ENCODE measurements at regions of chr12 and their contacts with region 1.

Region 1: GRCh38 chr12:53159195-53159839 is 21.2 kb upstream of the ZNF740 start:
- DNase-seq: peak; percentile 88
- H3K4me3 ChIP-seq: peak overlapping the region in 1 of 2 experiments; percentile 4; a peak in 1 of 4 replicates
- H3K27ac ChIP-seq: no peak overlapping the region
- H3K4me1 ChIP-seq: peaks cover 0 to 2% of the 10 kb centered on the region in 2 experiments; a peak in 2 of 4 replicates
- H3K27me3 ChIP-seq: no peaks in the 10 kb centered on the region
- CTCF ChIP-seq: peak; percentile 96
- EP300 ChIP-seq: no peak
- RAD21 ChIP-seq: peak; percentile 86

Region 2: DNA sequence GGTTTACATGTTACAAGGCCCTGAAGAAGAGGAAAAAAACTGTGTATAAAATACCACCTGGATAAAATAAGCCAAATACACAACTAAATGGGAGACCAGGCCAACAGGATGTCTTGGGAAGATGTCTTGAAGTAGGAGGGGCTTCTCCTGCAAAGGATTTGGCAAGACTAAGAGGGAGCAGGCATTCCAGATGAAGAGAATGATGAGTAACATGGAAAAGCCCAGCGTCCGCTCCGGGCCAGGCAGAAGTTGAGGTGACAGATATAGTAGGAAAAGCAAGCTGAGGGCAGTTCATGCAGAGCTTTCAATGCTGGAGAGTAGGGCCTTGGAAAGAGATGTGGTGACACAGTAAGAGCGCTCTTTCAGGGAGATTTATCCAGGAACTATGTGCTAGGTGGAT is 169.1 kb before region 1 on chr12:
- CTCF ChIA-PET with region 1: no interaction called
- POLR2A ChIA-PET with region 1: no interaction called
- DNase-seq: no peak
- H3K4me3 ChIP-seq: no peak overlapping the region
- H3K27ac ChIP-seq: no peak overlapping the region
- H3K4me1 ChIP-seq: no peaks in the 10 kb centered on the region
- H3K27me3 ChIP-seq: no peaks in the 10 kb centered on the region
- CTCF ChIP-seq: no peak
- EP300 ChIP-seq: no peak
- RAD21 ChIP-seq: no peak

Region 3: DNA sequence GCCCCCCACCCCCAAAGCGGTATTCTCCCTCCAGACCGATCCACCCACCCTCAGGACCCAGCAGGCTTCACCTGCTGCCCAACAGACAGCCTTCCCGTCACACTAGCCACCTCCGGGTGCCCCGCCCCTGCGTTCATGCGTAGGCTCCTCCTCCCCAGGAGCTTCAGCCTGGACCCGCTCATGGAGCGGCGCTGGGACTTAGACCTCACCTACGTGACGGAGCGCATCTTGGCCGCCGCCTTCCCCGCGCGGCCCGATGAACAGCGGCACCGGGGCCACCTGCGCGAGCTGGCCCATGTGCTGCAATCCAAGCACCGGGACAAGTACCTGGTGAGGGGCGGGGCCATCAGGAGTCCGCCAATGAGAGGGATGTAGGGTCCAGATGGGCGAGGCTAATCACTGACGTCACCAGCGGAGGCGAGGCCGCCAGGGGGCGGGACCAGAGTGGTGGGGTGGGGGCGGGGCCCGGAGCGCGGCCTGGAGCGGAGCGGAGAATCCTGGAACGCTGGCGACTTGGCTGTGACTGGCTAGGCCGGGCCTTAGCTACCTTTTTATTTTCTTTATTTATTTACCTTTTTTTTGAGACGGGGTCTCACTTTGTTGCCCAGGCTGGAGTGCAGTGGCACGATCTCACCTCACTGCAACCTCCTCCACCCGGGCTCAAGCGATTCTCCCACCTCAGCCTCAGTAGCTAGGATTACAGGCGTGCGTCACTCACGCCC is 105.0 kb before region 1 on chr12:
- CTCF ChIA-PET with region 1: interaction called, 16 read pairs
- POLR2A ChIA-PET with region 1: no interaction called
- DNase-seq: peak; percentile 97
- H3K4me3 ChIP-seq: peak overlapping the region; percentile 66
- H3K27ac ChIP-seq: peak overlapping the region; percentile 35 to 78; a peak in 3 of 4 replicates
- H3K4me1 ChIP-seq: peaks cover 25 to 46% of the 10 kb centered on the region in 2 experiments
- H3K27me3 ChIP-seq: no peaks in the 10 kb centered on the region
- CTCF ChIP-seq: no peak
- EP300 ChIP-seq: no peak
- RAD21 ChIP-seq: no peak

Region 4: DNA sequence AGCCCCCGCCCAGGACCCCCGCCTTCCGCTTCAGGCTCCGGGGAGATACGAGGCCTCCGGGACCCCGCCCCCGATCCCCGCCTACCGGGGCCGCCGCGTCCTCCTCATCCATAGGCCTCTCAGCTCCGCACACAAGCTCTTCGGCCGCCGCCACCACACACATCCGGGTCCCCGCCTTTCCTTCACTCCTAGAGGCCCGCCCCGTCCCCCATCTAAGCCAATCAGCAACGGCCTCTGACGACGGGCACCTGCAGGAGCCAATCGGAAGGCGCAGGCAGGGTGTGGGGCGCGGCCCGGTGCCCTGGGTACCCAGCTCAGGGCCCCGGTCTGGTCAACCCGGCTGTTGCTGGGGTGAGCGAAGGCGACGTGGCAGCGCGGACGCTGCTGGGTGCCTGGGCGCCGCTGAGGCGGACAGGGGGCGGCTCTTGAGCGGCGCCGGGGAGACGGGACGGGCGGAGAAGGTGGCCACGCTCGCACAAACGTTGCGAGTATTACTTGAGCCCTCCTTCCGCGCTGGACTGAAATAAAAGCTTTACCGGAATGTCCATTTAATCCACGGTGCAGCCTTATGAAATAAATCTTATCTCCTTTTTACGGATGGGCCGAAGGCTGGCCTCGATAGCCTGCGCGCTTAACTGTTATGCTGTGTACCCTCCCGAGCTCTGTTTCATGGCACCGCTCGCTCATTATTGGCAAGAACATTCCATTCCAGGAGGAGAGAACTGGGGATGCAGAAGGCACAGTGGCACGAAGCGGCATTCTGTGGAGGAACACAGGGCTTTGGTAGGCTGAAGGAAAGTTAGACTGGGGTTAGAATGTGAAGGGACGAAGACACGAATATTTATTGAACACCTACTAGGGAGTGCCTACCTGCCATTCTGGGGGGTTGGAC is 79.8 kb before region 1 on chr12 and contains the start of gene SPRYD3:
- CTCF ChIA-PET with region 1: interaction called, 10 read pairs
- POLR2A ChIA-PET with region 1: no interaction called
- DNase-seq: peak; percentile 100
- H3K4me3 ChIP-seq: peak within 1 kb of the TSS; percentile 55 to 72
- H3K27ac ChIP-seq: peak within 1 kb of the TSS; percentile 94 to 96
- H3K4me1 ChIP-seq: peaks cover 7 to 14% of the 10 kb centered on the region in 2 experiments; a peak in 2 of 4 replicates
- H3K27me3 ChIP-seq: no peaks in the 10 kb centered on the region
- CTCF ChIP-seq: no peak
- EP300 ChIP-seq: no peak; a peak in 1 of 4 replicates
- RAD21 ChIP-seq: no peak
- polyA plus RNA-seq, gene SPRYD3: 20.3 and 25.8 TPM in 2 replicates

Region 5: GRCh38 chr12:53145383-53146260 is 13.7 kb before region 1 on chr12:
- CTCF ChIA-PET with region 1: interaction called, 12 read pairs
- POLR2A ChIA-PET with region 1: no interaction called
- DNase-seq: no peak
- H3K4me3 ChIP-seq: no peak overlapping the region
- H3K27ac ChIP-seq: no peak overlapping the region
- H3K4me1 ChIP-seq: no peaks in the 10 kb centered on the region
- H3K27me3 ChIP-seq: no peaks in the 10 kb centered on the region
- CTCF ChIP-seq: no peak
- EP300 ChIP-seq: no peak
- RAD21 ChIP-seq: no peak

Region 6: DNA sequence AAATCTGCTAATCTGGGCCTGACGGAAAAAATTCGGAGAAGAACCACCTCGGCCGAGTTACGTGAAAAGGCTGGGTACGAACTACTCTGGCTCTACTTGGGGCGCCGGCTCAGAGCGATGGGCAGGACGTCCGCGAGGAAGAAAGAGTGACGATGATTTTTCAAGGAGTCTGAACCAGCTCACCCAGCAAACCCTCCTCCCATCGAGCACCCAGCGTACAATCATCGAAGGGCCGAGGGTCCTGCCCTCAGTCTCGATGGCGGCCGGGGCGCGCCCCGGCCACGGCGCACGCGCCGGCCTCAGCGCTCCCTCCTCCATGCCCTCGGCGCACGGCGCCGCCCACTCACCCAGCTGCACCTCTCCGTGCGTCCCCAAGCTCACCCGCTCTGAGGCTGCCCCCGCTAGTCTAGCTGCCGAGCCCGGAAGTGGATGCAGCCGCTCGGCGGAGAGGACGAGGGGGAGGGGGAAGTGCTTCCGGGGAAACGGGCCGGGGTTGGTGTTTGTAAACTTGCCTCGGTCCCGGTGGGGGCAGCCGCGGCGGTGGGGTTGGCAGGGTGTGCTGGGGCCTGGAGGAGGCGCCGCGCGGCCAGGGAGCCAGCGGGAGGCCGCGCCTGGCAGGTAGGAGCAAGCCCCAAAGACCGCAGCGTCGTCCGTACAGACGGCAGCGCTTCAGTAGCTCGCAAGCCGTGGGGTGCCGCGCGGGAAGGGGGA is 21.1 kb after region 1 on chr12 and contains the starts of genes CSAD and ZNF740:
- CTCF ChIA-PET with region 1: interaction called, 272 read pairs
- POLR2A ChIA-PET with region 1: interaction called, 12 read pairs
- DNase-seq: peak; percentile 98
- H3K4me3 ChIP-seq: peak within 1 kb of the TSS; percentile 77 to 78
- H3K27ac ChIP-seq: peak within 1 kb of the TSS; percentile 89 to 97
- H3K4me1 ChIP-seq: peaks cover 17 to 27% of the 10 kb centered on the region in 2 experiments; a peak in 3 of 4 replicates
- H3K27me3 ChIP-seq: no peaks in the 10 kb centered on the region
- CTCF ChIP-seq: no peak
- EP300 ChIP-seq: 0 out of 4 replicates have a peak, but pooled peaks of 1 of the 2 experiments have one; percentile 6
- RAD21 ChIP-seq: no peak
- polyA plus RNA-seq, gene CSAD: 32.2 and 45.4 TPM in 2 replicates
- polyA plus RNA-seq, gene ZNF740: 14.6 and 21.8 TPM in 2 replicates

Region 7: DNA sequence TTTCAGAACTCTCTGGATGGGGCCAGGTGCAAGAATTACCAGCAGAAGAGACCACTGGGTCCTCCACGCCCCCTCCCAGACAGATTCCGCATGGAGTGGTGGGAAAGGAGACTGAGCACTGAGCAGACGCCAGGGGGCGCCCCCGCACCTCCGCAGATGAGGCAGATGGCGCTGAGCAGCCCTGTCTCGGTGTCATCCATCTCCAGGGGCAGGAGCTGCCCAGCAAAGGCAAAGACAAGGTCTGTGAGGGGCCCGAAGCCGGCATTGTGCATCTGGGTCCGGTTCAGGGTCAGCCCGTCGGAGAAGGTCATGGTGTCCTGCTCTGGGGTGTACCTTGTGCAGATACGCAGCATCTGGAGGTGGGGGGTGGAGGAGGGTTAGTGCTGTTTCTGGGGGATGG is 54.0 kb after region 1 on chr12:
- CTCF ChIA-PET with region 1: interaction called, 69 read pairs
- POLR2A ChIA-PET with region 1: no interaction called
- DNase-seq: peak; percentile 93
- H3K4me3 ChIP-seq: no peak overlapping the region
- H3K27ac ChIP-seq: no peak overlapping the region; a peak in 1 of 4 replicates
- H3K4me1 ChIP-seq: peaks cover 6 to 19% of the 10 kb centered on the region in 2 experiments; a peak in 3 of 4 replicates
- H3K27me3 ChIP-seq: no peaks in the 10 kb centered on the region
- CTCF ChIP-seq: peak; percentile 93
- EP300 ChIP-seq: no peak
- RAD21 ChIP-seq: peak; percentile 96

Region 8: GRCh38 chr12:53287741-53288216 is 128.5 kb after region 1 on chr12:
- CTCF ChIA-PET with region 1: interaction called, 23 read pairs
- POLR2A ChIA-PET with region 1: no interaction called
- DNase-seq: peak; percentile 72
- H3K4me3 ChIP-seq: no peak overlapping the region; a peak in 1 of 4 replicates
- H3K27ac ChIP-seq: no peak overlapping the region
- H3K4me1 ChIP-seq: peaks cover 0 to 19% of the 10 kb centered on the region in 2 experiments; a peak in 2 of 4 replicates
- H3K27me3 ChIP-seq: no peaks in the 10 kb centered on the region
- CTCF ChIP-seq: peak; percentile 73
- EP300 ChIP-seq: no peak
- RAD21 ChIP-seq: peak; percentile 82